IMR-90 (cell line): ENCODE measurements at regions of chr18 and their contacts with region 1.

Region 1: DNA sequence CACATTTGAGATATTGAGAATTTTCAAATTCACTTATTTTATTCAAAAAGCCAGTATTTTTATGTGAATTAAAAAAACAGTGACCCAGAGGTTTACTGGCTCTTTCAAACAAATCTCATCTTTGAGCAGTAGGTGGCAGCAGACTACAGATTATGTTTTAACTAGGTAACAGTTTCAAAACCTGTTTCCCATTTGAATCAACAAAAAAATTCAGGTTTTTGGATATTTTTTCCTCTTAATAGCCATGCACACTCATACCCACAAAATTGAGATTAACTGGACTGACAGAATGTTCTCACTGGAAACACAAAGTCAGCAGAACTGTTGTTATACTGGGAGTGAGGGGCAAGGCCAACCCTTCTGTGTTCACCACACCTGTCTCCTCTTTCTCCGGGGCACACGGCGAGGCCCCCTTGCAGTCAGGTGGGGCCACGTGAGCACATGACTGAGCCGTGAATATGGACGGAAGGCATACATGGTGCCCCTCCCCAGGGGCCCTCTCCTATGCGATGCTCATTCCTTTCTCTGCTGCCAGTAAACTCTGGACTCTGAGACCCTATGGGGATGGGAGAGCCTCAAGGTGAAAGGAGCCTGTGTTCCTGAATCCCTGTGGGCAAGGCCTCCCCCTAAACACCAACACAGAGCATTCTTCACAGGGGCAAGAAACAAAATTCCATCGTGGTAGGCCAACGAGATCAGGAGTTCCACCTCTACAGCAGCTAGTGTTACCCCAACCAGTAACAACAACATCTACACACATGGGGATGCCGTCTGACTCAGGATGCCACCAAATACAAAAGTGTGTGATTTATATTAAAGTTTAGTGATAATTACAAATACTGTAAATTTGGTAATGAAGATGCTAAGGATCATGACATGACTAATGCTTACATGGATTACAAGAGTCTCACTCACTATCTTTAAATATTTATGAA is 80.4 kb downstream of the LPIN2 start:
- DNase-seq: peak; percentile 70
- ATAC-seq: peak; percentile 56
- H3K4me3 ChIP-seq: no peak overlapping the region
- H3K27ac ChIP-seq: peak overlapping the region; percentile 39; the same call in 1 of the 2 replicates
- H3K4me1 ChIP-seq: peaks cover 14% of the 10 kb centered on the region
- H3K27me3 ChIP-seq: no peaks in the 10 kb centered on the region
- CTCF ChIP-seq: peak; percentile 82
- POLR2A ChIP-seq: no peak
- RAD21 ChIP-seq: peak; percentile 84

Region 2: DNA sequence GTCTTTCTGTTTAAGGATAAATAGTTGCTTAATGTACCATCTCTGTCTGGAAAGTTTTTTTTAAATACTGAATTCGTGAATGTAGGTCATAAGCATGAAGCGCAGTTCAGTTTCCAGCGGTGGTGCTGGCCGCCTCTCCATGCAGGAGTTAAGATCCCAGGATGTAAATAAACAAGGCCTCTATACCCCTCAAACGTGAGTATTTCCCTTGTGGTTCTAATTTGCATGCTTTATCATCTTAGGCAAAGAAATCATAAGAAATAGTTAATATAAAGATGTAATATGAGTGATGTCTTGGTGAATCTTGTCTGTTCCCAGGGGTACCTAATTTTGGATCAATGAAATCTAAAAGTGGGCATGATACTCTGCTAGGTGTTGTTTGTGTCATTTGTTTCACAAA is 359.6 kb before region 1 on chr18:
- CTCF ChIA-PET with region 1: no interaction called
- POLR2A ChIA-PET with region 1: no interaction called
- dilution Hi-C with region 1: no loop called
- in situ Hi-C with region 1: no loop called
- intact Hi-C with region 1: no loop called
- DNase-seq: no peak
- ATAC-seq: no peak
- H3K4me3 ChIP-seq: peak overlapping the region; percentile 66
- H3K27ac ChIP-seq: no peak overlapping the region
- H3K4me1 ChIP-seq: peaks cover 5% of the 10 kb centered on the region
- H3K27me3 ChIP-seq: no peaks in the 10 kb centered on the region
- CTCF ChIP-seq: no peak
- POLR2A ChIP-seq: no peak
- RAD21 ChIP-seq: no peak

Region 3: GRCh38 chr18:3012964-3013804 is 80.7 kb after region 1 on chr18 and contains the start of gene LPIN2:
- CTCF ChIA-PET with region 1: no interaction called
- POLR2A ChIA-PET with region 1: no interaction called
- dilution Hi-C with region 1: no loop called
- in situ Hi-C with region 1: no loop called
- intact Hi-C with region 1: loop called (anchors 2 kb)
- DNase-seq: peak; percentile 96
- ATAC-seq: peak; percentile 83
- H3K4me3 ChIP-seq: peak within 1 kb of the TSS; percentile 98
- H3K27ac ChIP-seq: peak within 1 kb of the TSS; percentile 96
- H3K4me1 ChIP-seq: peaks cover 20% of the 10 kb centered on the region
- H3K27me3 ChIP-seq: no peaks in the 10 kb centered on the region
- CTCF ChIP-seq: no peak
- POLR2A ChIP-seq: peak; percentile 85
- RAD21 ChIP-seq: no peak
- total RNA-seq, gene LPIN2: 21.9 and 23.9 TPM in 2 replicates

Region 4: GRCh38 chr18:3129053-3129864 is 196.7 kb after region 1 on chr18:
- CTCF ChIA-PET with region 1: interaction called, 4 read pairs
- POLR2A ChIA-PET with region 1: no interaction called
- dilution Hi-C with region 1: no loop called
- in situ Hi-C with region 1: loop called (anchors 10 kb)
- intact Hi-C with region 1: loop called (anchors 1 kb)
- DNase-seq: peak; percentile 78
- ATAC-seq: peak; percentile 100
- H3K4me3 ChIP-seq: no peak overlapping the region
- H3K27ac ChIP-seq: no peak overlapping the region
- H3K4me1 ChIP-seq: no peaks in the 10 kb centered on the region
- H3K27me3 ChIP-seq: no peaks in the 10 kb centered on the region; the same call in 1 of the 2 replicates
- CTCF ChIP-seq: peak; percentile 83
- POLR2A ChIP-seq: no peak
- RAD21 ChIP-seq: peak; percentile 68

Region 5: DNA sequence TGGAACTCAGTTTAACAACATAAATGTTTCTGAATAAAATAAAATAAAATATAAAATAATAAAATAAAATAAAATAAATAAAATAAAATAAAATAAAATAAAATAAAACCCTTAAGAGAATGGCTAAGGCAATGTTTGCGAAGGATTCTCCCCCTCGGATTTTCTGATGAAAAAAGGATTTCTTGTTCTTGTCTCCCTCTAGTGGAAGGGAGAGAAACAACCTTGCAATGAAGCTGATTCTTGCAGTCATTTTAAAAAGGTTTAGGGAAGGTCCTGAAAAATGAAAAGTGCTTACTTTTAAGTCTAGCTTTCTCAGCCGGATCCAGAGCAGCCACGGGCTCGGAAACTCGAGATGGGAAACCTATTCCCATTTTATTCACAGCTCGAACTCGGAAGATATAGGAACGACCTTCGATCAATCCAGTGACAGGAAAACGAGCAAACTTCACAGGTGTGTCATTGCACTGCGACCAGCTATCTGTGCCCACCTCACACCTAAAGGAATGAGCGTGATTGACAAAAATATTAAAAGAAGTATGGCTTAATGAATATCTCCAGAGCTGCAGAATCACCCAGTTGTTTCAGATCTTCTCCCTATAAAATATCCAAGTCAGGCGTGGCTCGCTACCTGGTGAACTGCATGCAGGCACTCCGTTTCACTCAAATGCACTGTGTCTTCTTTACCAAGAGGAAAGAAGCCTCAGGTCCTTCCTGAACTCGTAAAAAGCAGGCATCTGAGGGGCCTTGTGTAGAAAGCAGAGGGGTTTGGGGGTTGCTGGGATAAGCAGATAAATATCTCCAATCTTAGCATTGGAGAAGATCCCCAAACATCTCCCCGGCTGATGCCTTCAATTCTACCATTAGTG is 219.1 kb after region 1 on chr18:
- CTCF ChIA-PET with region 1: interaction called, 7 read pairs
- POLR2A ChIA-PET with region 1: no interaction called
- dilution Hi-C with region 1: no loop called
- in situ Hi-C with region 1: no loop called
- intact Hi-C with region 1: loop called (anchors 1 kb)
- DNase-seq: peak; percentile 52
- ATAC-seq: no peak
- H3K4me3 ChIP-seq: no peak overlapping the region
- H3K27ac ChIP-seq: no peak overlapping the region
- H3K4me1 ChIP-seq: no peaks in the 10 kb centered on the region
- H3K27me3 ChIP-seq: no peaks in the 10 kb centered on the region; the same call in 1 of the 2 replicates
- CTCF ChIP-seq: peak; percentile 74
- POLR2A ChIP-seq: no peak
- RAD21 ChIP-seq: peak; percentile 64

Region 6: GRCh38 chr18:3665780-3666525 is 733.4 kb after region 1 on chr18:
- CTCF ChIA-PET with region 1: no interaction called
- POLR2A ChIA-PET with region 1: no interaction called
- dilution Hi-C with region 1: no loop called
- in situ Hi-C with region 1: no loop called
- intact Hi-C with region 1: loop called (anchors 5 kb)
- DNase-seq: peak; percentile 91
- ATAC-seq: peak; percentile 96
- H3K4me3 ChIP-seq: no peak overlapping the region
- H3K27ac ChIP-seq: peak overlapping the region; percentile 72
- H3K4me1 ChIP-seq: peaks cover 7% of the 10 kb centered on the region
- H3K27me3 ChIP-seq: no peaks in the 10 kb centered on the region
- CTCF ChIP-seq: peak; percentile 94
- POLR2A ChIP-seq: no peak
- RAD21 ChIP-seq: peak; percentile 99